Common myeloid progenitor, CD34-positive (primary cell): ENCODE measurements at regions of chr3 and their contacts with region 1.

Region 1: GRCh38 chr3:98022978-98023820 is 11.9 kb downstream of the GABRR3 start:
- DNase-seq: peak; percentile 72 to 88 (median 79)
- H3K4me3 ChIP-seq: no peak overlapping the region
- H3K27ac ChIP-seq: no peak overlapping the region
- H3K4me1 ChIP-seq: no peaks in the 10 kb centered on the region
- H3K27me3 ChIP-seq: no peaks in the 10 kb centered on the region

Region 2: DNA sequence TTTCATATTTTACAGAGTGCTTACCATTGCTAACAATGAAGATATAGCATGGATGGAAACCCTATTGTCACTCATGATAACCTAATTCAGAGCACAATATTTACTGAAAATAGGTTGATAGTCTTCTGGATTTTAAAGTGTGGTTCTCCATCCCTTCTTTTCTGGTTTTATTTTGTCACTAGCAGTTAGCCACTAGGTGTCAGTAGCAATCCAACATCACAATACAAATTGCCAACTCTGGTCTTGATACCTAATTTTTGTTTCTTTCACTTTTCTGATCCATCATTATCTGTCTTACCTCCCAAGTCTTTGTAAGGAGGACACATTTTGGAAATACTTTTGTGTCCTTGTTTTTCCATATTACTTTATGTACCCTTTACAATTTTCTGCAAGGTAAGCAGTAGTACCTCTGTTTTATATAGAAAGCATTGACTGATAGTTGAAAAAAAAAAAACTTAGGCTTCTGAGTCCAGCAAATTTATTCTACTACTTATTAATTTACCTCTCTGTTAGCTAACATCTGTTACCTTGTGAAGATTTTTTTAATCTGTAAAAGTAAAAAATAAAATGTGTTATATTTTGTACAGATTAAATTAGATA is 229.7 kb before region 1 on chr3:
- CTCF ChIA-PET with region 1: interaction called, 60 read pairs
- POLR2A ChIA-PET with region 1: no interaction called
- DNase-seq: peak; percentile 63 to 81 (median 75)
- H3K4me3 ChIP-seq: no peak overlapping the region
- H3K27ac ChIP-seq: no peak overlapping the region
- H3K4me1 ChIP-seq: no peaks in the 10 kb centered on the region
- H3K27me3 ChIP-seq: no peaks in the 10 kb centered on the region

Region 3: GRCh38 chr3:97804471-97804870 is 218.7 kb before region 1 on chr3:
- CTCF ChIA-PET with region 1: interaction called, 20 read pairs
- POLR2A ChIA-PET with region 1: no interaction called
- DNase-seq: no peak
- H3K4me3 ChIP-seq: no peak overlapping the region
- H3K27ac ChIP-seq: no peak overlapping the region
- H3K4me1 ChIP-seq: no peaks in the 10 kb centered on the region
- H3K27me3 ChIP-seq: no peaks in the 10 kb centered on the region

Region 4: DNA sequence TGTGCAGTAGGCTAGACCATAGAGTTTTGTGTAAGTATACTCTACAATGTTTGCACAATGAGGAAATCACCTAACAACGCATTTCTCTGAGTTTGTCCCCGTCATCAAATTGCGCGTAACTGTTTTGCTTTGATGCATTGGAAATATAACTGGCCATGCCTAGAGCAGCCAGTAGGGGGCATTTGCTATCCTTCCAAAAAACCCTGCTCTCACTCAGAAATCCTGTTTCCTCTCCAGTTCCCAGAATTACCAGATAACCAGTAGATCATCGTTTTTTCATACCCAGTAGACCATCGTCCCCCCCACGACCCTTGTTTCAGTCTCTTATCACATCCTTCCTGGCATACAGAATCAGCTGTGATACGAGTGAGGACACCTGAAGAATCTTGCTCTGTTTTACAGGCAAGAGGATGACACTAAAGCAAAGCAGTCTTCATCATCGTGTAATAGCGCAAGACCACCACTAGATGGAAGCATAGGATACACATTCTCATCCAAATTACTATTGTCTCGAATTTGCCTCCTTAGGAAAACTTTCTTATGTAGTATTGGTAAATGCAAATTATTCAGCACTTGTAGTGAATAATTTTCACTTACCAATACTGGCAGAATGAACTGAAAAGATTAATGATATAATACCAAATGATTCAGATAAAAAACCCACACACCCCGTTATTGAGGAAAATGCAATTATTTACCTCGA is 16.3 kb after region 1 on chr3:
- CTCF ChIA-PET with region 1: interaction called, 11 read pairs
- POLR2A ChIA-PET with region 1: no interaction called
- DNase-seq: peak; percentile 86 to 93 (median 92)
- H3K4me3 ChIP-seq: peak overlapping the region in 6 of 7 experiments; percentile 28 to 77 (median 50)
- H3K27ac ChIP-seq: no peak overlapping the region
- H3K4me1 ChIP-seq: peaks cover 0 to 6% (median under 1%) of the 10 kb centered on the region in 4 experiments
- H3K27me3 ChIP-seq: peaks cover 0 to 7% (median 0%) of the 10 kb centered on the region in 5 experiments